Dendritic cell treated with granulocyte-macrophage colony-stimulating factor and Interleukin-4, amounts not matched to agents 40 ng/mL and 50 ng/mL, for 4 days (primary cell): ENCODE measurements at regions of chr4 and their contacts with region 1.

Region 1: GRCh38 chr4:150867148-150867547 is 147.9 kb downstream of the LRBA start:
- H3K4me3 Mint-ChIP-seq: no peak overlapping the region
- H3K27ac Mint-ChIP-seq: no peak overlapping the region
- H3K4me1 Mint-ChIP-seq: no peaks in the 10 kb centered on the region
- H3K27me3 Mint-ChIP-seq: no peaks in the 10 kb centered on the region

Region 2: DNA sequence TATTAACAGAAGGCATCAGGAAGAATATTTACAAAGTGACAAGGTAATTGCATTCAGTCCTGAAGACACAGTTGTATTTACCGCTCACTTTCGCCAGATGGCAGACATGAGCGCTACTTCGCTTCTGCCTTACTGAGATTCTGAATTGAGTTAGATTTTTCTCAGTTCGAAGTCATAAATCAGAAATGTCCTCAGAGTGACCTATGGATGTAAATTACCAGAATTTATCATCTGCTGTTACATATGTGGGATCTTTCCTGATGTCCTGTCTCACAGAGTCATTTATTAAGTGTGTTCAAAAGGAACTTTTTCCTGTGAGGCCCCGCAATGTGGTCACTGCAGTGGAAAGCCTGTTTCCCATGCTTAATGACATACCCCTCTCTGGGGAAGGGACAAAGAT is 886.2 kb before region 1 on chr4:
- intact Hi-C with region 1: loop called (anchors 5 kb)
- H3K4me3 Mint-ChIP-seq: no peak overlapping the region
- H3K27ac Mint-ChIP-seq: no peak overlapping the region
- H3K4me1 Mint-ChIP-seq: no peaks in the 10 kb centered on the region
- H3K27me3 Mint-ChIP-seq: no peaks in the 10 kb centered on the region

Region 3: DNA sequence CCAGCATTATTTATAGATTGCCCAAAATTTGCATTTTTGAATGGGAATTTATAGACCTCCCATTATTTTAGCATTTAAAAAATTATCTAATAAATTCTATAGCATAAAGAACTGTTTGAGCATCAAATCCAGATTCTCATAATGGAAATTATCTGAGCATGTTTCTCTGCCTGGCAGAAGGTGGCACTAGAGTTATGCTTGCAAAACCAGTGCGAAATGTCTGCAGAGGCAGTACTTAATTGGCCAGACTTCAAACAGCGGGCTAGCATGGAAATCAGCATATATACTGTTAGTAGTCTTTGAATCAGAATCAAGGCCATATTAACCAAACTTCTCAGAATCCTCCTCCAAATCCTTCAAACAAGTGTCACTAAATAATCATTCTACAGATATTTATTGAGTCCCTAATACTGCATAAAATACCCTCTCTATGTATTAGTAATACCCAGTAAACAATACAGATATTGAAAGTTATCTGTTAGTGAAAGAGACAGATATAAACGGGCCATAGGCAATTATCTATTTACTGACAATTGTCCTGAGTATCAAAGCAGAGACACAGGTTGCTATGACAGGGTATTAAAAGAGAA is 867.6 kb before region 1 on chr4:
- intact Hi-C with region 1: loop called (anchors 2 kb)
- H3K4me3 Mint-ChIP-seq: no peak overlapping the region
- H3K27ac Mint-ChIP-seq: no peak overlapping the region
- H3K4me1 Mint-ChIP-seq: no peaks in the 10 kb centered on the region
- H3K27me3 Mint-ChIP-seq: peaks cover 2% of the 10 kb centered on the region

Region 4: GRCh38 chr4:150297861-150298474 is 569.2 kb before region 1 on chr4:
- intact Hi-C with region 1: loop called (anchors 1 kb)
- H3K4me3 Mint-ChIP-seq: no peak overlapping the region
- H3K27ac Mint-ChIP-seq: no peak overlapping the region
- H3K4me1 Mint-ChIP-seq: peaks cover 4% of the 10 kb centered on the region
- H3K27me3 Mint-ChIP-seq: no peaks in the 10 kb centered on the region

Region 5: GRCh38 chr4:151031831-151032605 is 164.9 kb after region 1 on chr4:
- intact Hi-C with region 1: no loop called
- H3K4me3 Mint-ChIP-seq: peak overlapping the region; percentile 64
- H3K27ac Mint-ChIP-seq: no peak overlapping the region
- H3K4me1 Mint-ChIP-seq: peaks cover 16% of the 10 kb centered on the region
- H3K27me3 Mint-ChIP-seq: peaks cover 3% of the 10 kb centered on the region